ENCODE measurements at regions of chr3 and their contacts with region 1.

Region 1: GRCh38 chr3:168847291-168847883 is 751.7 kb upstream of the GOLIM4 start:
- DNase-seq: peak; percentile 23
- ATAC-seq: no peak
- H3K4me3 Mint-ChIP-seq: no peak overlapping the region
- H3K27ac Mint-ChIP-seq: no peak overlapping the region
- H3K4me1 Mint-ChIP-seq: no peaks in the 10 kb centered on the region
- H3K27me3 Mint-ChIP-seq: peaks cover 4% of the 10 kb centered on the region
- CTCF ChIP-seq: no peak

Region 2: DNA sequence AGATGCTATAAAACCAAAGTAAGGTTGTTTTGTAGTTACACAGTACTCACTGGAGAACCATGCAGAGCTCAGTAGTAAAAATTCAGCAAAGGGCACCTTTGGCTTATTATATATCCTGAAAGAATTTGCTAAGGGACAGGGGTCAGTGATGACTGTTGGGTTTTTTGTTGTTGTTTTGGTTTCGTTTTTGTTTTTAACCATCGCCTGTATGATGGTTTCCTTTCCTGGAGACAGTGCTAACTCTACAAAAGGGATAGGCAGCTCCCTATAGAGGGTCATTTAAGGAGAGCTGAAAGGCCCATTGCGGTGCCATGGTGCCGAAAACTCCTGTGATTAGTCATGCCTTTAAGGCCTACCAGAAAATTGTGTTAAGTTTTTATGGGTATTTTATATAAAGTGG is 633.5 kb before region 1 on chr3:
- CTCF ChIA-PET with region 1: interaction called, 19 read pairs
- POLR2A ChIA-PET with region 1: no interaction called
- intact Hi-C with region 1: loop called (anchors 1 kb)
- DNase-seq: no peak
- ATAC-seq: peak; percentile 66
- H3K4me3 Mint-ChIP-seq: no peak overlapping the region
- H3K27ac Mint-ChIP-seq: no peak overlapping the region
- H3K4me1 Mint-ChIP-seq: peaks cover 10% of the 10 kb centered on the region
- H3K27me3 Mint-ChIP-seq: no peaks in the 10 kb centered on the region
- CTCF ChIP-seq: no peak

Region 3: DNA sequence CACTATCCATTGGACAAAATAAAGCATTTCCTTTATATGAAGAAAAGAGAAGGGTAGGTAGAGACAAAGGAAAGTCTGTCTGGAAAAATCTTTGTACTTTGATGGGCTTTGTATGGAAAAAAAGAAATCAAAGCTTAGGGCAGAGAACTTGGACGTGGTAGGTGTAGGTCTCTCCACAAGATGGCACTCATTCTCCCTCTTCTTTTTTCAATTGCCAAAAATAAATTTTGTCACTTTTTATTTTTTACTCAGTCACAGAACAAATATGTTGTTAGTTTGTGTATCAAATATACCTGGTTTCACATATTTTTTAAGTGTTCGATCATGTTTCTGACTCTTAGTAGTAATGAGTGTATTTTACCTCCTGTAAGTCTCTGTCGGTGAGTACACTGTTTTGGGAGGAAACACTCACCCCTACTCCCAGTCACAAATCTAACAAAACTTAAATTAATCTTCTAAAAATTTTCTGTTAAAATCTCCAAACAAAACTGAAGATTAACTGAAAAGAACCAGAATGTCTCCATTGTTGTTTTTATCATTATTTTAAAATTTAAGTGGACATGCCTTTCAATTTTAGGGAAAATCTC is 335.9 kb before region 1 on chr3:
- CTCF ChIA-PET with region 1: interaction called, 3 read pairs
- POLR2A ChIA-PET with region 1: no interaction called
- intact Hi-C with region 1: loop called (anchors 10 kb)
- DNase-seq: no peak
- ATAC-seq: no peak
- H3K4me3 Mint-ChIP-seq: no peak overlapping the region
- H3K27ac Mint-ChIP-seq: no peak overlapping the region
- H3K4me1 Mint-ChIP-seq: no peaks in the 10 kb centered on the region
- H3K27me3 Mint-ChIP-seq: no peaks in the 10 kb centered on the region
- CTCF ChIP-seq: peak; percentile 20

Measured in activated CD8-positive, alpha-beta T cell treated with anti-CD3 and anti-CD28 coated beads for 36 hours (primary cell).